ENCODE measurements at regions of chr1 and their contacts with region 1.

Region 1: DNA sequence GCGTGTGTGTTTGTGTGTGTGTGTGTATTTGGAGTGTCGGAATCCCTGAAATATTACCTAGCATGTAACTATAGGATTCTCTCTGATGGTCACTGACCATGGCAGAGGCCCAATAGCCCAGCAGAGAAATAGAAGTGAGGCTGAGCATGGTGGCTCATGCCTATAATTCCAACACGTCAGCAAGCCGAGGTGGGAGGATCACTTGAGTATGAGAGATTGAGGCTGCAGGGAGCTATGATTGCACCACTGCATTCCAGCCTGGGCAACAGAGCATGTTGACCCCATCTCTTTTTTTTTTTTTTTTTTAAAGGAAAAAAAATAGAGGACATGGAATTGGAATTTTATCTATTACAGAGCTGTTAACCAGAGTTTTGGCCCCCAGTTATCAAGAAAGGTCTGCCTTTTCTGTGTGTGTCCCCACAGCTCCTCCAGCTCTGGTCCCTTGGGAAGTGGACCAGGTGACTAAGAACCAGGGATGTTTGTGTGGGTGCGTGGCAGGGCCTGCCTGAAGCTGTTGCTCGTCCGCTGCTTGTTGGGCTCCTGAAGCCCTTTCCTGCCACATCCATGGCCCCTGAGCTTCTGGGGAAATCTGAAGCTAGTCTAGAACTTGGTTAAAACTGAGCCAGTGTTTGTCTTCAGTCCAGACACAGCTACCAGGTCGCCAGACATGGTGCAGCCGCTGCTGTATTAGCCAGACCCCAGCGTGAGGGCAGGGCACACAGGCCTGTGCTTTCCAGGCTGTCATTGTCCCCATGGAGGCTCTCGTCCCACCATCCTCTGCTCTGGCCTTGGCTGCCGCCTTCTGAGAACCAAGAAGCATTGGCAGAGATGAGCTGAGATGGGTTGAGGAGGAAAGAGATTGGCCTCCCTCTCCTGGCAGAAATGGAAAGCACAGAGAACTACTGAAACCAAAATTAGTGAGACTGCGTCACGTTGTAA is 25.5 kb downstream of the CAPN9 start:
- DNase-seq: no peak
- H3K4me3 ChIP-seq: no peak overlapping the region
- H3K27ac ChIP-seq: no peak overlapping the region
- H3K4me1 ChIP-seq: peaks cover 0 to 3% (median 1%) of the 10 kb centered on the region in 4 experiments; a peak in 3 of 7 replicates
- H3K27me3 ChIP-seq: peaks cover 0 to 3% (median 0%) of the 10 kb centered on the region in 4 experiments; a peak in 1 of 7 replicates
- CTCF ChIP-seq: peak; percentile 10 to 77 (median 68)
- EP300 ChIP-seq: no peak
- POLR2A ChIP-seq: no peak
- RAD21 ChIP-seq: peak; percentile 81 to 87

Region 2: DNA sequence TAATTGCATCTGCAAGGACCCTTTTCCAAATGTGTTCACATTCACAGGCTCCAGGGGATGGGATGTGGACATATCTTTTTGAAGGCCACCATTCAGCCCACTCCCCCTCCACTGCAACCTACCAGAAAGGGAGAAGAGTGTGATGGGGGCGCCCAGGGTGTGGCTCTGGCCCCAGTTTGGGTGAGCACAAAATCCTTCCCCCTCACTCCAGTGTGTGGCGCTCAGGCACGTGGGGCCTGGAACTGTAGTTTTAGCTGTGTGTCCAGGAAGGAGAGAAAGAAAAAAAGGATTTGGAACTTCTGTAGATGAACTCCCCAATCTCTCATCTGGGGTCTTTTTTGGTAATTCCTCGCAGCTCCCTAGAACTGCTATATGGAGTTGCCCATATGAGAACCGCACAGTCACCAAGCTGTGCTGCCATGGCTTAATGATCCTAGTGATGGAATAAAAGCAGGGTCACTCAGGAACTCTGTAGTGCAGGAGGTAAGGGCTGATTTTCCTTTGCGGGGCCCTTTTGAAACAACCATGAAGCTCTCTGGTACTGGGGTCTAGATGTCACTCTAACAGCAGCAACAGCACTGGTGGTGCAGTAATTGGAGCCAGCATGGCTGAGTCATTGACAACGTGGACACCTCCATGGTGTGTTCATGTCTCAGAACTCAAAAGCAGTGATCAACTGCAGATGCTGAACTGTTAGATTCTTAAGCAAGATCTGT is 75.8 kb before region 1 on chr1:
- CTCF ChIA-PET with region 1: interaction called, 10 read pairs
- POLR2A ChIA-PET with region 1: interaction called, 3 read pairs
- DNase-seq: no peak
- H3K4me3 ChIP-seq: no peak overlapping the region
- H3K27ac ChIP-seq: no peak overlapping the region
- H3K4me1 ChIP-seq: peaks cover 0 to 8% (median 1%) of the 10 kb centered on the region in 4 experiments; a peak in 1 of 7 replicates
- H3K27me3 ChIP-seq: no peaks in the 10 kb centered on the region
- CTCF ChIP-seq: 0 out of 4 replicates have a peak, but pooled peaks of 1 of the 3 experiments have one; percentile 7
- EP300 ChIP-seq: no peak
- POLR2A ChIP-seq: no peak
- RAD21 ChIP-seq: peak; percentile 25 to 30; a peak in 2 of 4 replicates

Region 3: GRCh38 chr1:230713915-230714764 is 58.6 kb before region 1 on chr1 and contains the start of gene AGT:
- CTCF ChIA-PET with region 1: interaction called, 26 read pairs
- POLR2A ChIA-PET with region 1: no interaction called
- DNase-seq: no peak
- H3K4me3 ChIP-seq: no peak within 1 kb of the TSS
- H3K27ac ChIP-seq: no peak within 1 kb of the TSS
- H3K4me1 ChIP-seq: peaks cover 0 to 10% (median 4%) of the 10 kb centered on the region in 4 experiments; a peak in 4 of 7 replicates
- H3K27me3 ChIP-seq: no peaks in the 10 kb centered on the region; a peak in 1 of 7 replicates
- CTCF ChIP-seq: no peak
- EP300 ChIP-seq: no peak
- POLR2A ChIP-seq: no peak
- RAD21 ChIP-seq: no peak
- total RNA-seq, gene AGT: not detected in 2 replicates

Region 4: GRCh38 chr1:230745071-230745470 is 27.7 kb before region 1 on chr1:
- CTCF ChIA-PET with region 1: no interaction called
- POLR2A ChIA-PET with region 1: no interaction called
- DNase-seq: no peak
- H3K4me3 ChIP-seq: no peak overlapping the region
- H3K27ac ChIP-seq: no peak overlapping the region
- H3K4me1 ChIP-seq: peaks cover 0 to 10% (median 3%) of the 10 kb centered on the region in 4 experiments; a peak in 5 of 7 replicates
- H3K27me3 ChIP-seq: no peaks in the 10 kb centered on the region; a peak in 1 of 7 replicates
- CTCF ChIP-seq: no peak
- EP300 ChIP-seq: no peak
- POLR2A ChIP-seq: no peak
- RAD21 ChIP-seq: no peak

Region 5: DNA sequence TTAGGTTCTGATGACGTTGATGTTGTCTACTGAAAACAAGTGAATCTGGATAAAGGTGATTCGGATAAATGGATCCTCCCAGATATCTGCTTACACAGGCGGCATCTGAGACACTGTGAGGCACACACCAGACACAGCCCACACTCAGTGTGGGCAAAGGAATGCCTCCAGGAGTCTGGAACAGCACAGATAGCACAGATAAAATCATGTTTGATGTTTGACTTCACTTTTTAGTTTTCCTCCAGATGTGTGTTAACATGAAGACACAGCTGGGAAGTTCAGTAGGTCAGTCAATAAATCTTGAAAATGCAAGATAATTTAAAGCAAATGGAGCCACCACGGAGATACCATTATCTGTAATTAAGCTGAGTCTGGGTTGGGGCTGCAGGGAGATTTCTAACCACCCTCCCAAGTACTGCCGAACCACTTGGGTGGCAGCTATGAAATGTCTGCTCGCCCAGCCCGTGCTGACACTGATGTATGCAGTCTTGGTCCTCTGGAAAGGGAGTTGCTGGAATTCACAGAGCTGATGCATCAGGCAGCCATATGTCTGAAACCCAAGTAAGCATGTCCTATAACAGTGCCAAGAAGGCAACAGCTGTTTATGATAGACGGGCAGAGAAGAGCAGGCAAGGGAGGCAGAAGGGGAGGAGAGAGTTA is 13.9 kb before region 1 on chr1:
- CTCF ChIA-PET with region 1: interaction called, 36 read pairs
- POLR2A ChIA-PET with region 1: interaction called, 3 read pairs
- DNase-seq: no peak
- H3K4me3 ChIP-seq: no peak overlapping the region
- H3K27ac ChIP-seq: no peak overlapping the region
- H3K4me1 ChIP-seq: peaks cover 0 to 4% (median 1%) of the 10 kb centered on the region in 4 experiments; a peak in 4 of 7 replicates
- H3K27me3 ChIP-seq: no peaks in the 10 kb centered on the region
- CTCF ChIP-seq: no peak
- EP300 ChIP-seq: no peak
- POLR2A ChIP-seq: no peak
- RAD21 ChIP-seq: no peak

Measured in H1 (cell line).